ENCODE measurements at regions of chr17 and their contacts with region 1.

Region 1: DNA sequence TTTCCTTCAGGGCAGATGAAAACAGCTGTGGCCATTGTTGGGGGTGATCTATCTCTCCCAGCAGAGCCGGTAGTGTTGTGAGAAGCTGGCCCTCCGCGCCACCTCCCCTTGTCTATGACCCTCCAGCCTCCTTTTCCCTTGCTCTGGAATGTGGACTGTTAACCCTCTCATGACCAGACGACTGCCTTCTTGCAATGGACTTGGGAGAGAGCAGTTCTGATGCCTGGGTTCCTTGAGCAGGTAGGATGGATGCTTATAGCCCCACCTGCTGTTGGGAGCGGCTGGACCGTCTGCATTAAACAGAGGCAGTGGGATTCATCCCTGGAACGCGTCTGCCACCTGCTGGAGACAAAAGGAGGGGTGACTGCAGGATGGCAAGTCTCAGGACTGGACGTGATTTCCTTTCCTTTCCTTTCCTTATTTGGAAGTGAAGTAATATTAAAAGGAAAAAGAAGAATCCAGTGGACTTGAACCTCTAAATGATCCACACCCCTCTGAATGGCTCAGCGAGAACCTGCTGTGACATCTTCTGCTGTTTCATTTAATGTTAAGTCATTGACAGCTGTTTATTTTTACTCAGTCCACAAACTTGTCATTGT is 1.8 kb upstream of the SOST start:
- DNase-seq: peak; percentile 87 to 93 (median 90)
- H3K4me3 ChIP-seq: no peak overlapping the region
- H3K27ac ChIP-seq: no peak overlapping the region
- H3K4me1 ChIP-seq: peaks cover 0 to 7% (median 5%) of the 10 kb centered on the region in 4 experiments
- H3K27me3 ChIP-seq: peaks cover 0 to 35% (median 23%) of the 10 kb centered on the region in 5 experiments

Region 2: GRCh38 chr17:43591779-43592562 is 168.4 kb before region 1 on chr17:
- CTCF ChIA-PET with region 1: no interaction called
- POLR2A ChIA-PET with region 1: no interaction called
- DNase-seq: no peak
- H3K4me3 ChIP-seq: no peak overlapping the region
- H3K27ac ChIP-seq: no peak overlapping the region
- H3K4me1 ChIP-seq: no peaks in the 10 kb centered on the region
- H3K27me3 ChIP-seq: peaks cover 0 to 2% (median 0%) of the 10 kb centered on the region in 5 experiments

Region 3: GRCh38 chr17:43680461-43680860 is 79.9 kb before region 1 on chr17:
- CTCF ChIA-PET with region 1: interaction called, 12 read pairs
- POLR2A ChIA-PET with region 1: no interaction called
- DNase-seq: peak; percentile 43 to 82 (median 77)
- H3K4me3 ChIP-seq: peak overlapping the region in 3 of 7 experiments; percentile 21 to 46 (median 37)
- H3K27ac ChIP-seq: no peak overlapping the region
- H3K4me1 ChIP-seq: peaks cover 0 to 34% (median 28%) of the 10 kb centered on the region in 4 experiments
- H3K27me3 ChIP-seq: no peaks in the 10 kb centered on the region

Region 4: GRCh38 chr17:43694077-43694870 is 66.1 kb before region 1 on chr17:
- CTCF ChIA-PET with region 1: interaction called, 555 read pairs
- POLR2A ChIA-PET with region 1: interaction called, 4 read pairs
- DNase-seq: peak; percentile 82 to 89 (median 85)
- H3K4me3 ChIP-seq: no peak overlapping the region
- H3K27ac ChIP-seq: no peak overlapping the region
- H3K4me1 ChIP-seq: peaks cover 0 to 11% (median 0%) of the 10 kb centered on the region in 4 experiments
- H3K27me3 ChIP-seq: peaks cover 0 to 18% (median 14%) of the 10 kb centered on the region in 5 experiments

Region 5: DNA sequence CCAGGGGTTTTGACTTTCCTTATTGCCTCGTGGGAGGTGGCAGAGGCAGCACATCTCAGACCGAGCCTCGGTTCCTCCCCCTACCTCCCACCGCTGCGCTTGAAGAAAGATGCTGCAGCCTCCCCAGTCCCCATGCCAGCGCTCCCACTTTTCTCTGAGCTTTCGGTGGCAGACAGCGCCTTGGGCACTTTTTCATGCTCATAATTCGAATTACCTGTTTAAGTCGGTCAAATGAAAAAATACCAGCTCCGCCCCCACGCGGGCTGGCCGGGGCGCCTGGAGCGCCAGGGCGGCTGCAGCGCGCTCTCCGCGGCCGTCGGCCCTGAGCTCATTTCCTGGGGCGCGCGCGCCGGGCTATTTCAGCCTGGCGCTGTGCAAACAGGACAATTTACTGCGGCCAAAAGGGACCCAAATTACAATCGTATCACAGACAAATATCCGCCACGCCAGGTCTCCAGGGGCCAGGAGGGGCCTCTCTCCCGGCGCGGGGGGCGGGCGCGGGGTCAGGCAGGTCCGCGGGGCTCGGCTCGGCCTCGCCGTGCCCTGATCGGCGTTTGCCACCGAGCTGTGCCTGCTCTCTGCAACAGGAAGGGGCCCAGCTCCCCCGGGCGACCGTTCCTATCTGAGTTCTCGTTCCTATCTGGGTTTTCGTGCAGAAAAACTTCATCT is 46.7 kb before region 1 on chr17:
- CTCF ChIA-PET with region 1: interaction called, 16 read pairs
- POLR2A ChIA-PET with region 1: no interaction called
- DNase-seq: peak in 2 of 3 donors; percentile 41 to 45
- H3K4me3 ChIP-seq: peak overlapping the region; percentile 9 to 75 (median 60)
- H3K27ac ChIP-seq: no peak overlapping the region
- H3K4me1 ChIP-seq: peaks cover 5 to 24% (median 19%) of the 10 kb centered on the region in 4 experiments
- H3K27me3 ChIP-seq: peaks cover 0 to 18% (median 2%) of the 10 kb centered on the region in 5 experiments

Region 6: GRCh38 chr17:43740541-43740940 is 19.8 kb before region 1 on chr17:
- CTCF ChIA-PET with region 1: interaction called, 11 read pairs
- POLR2A ChIA-PET with region 1: no interaction called
- DNase-seq: no peak
- H3K4me3 ChIP-seq: no peak overlapping the region
- H3K27ac ChIP-seq: no peak overlapping the region
- H3K4me1 ChIP-seq: peaks cover 0 to 5% (median 1%) of the 10 kb centered on the region in 4 experiments
- H3K27me3 ChIP-seq: peaks cover 0 to 12% (median 8%) of the 10 kb centered on the region in 5 experiments

Region 7: DNA sequence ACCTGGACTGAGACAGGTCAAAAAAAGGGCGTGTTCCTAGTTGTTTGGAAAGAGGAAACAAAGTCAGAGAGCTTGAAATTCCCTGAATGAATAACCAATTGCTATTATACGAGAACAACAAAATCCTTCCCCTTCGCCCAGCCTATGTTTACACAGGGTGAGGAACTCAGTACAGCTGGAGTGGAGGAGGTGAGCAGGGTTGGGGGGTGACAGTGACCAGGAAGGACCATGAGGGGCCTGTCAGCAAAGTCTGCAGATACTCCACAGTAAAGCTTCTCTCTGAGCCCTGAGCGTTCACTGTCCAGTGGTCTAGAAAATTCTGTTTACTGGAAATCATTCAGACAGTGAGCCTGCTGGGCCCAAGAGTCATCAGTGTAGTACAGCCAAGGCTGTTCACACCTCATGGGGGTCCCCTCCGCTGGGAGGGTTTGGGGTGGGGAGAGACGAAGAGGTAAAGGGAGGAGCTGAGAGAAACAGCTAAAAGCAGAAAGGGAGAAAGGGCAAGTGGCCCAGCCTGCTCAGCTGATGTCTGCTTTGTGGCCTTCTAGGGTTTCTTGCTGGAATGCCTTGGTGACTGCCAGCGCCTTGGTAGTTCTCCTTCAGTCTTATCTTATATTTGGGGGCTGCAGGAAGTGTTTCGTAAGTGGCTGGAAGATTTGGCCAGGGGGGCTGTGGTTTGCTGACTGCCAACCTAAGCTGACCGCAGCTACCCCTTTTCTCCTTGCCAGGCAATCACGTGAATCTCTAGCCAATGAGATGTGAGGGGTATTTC is 12.7 kb after region 1 on chr17:
- CTCF ChIA-PET with region 1: interaction called, 25 read pairs
- POLR2A ChIA-PET with region 1: no interaction called
- DNase-seq: peak; percentile 96 to 99 (median 99)
- H3K4me3 ChIP-seq: peak overlapping the region in 4 of 7 experiments; percentile 21 to 39 (median 28)
- H3K27ac ChIP-seq: peak overlapping the region; percentile 41 to 55
- H3K4me1 ChIP-seq: peaks cover 18 to 91% (median 83%) of the 10 kb centered on the region in 4 experiments
- H3K27me3 ChIP-seq: no peaks in the 10 kb centered on the region

Measured in common myeloid progenitor, CD34-positive (primary cell).